ENCODE measurements at regions of chr22 and their contacts with region 1.

Region 1: GRCh38 chr22:32265882-32266767 is 11.0 kb upstream of the SLC5A4 start:
- DNase-seq: no peak

Region 2: GRCh38 chr22:31977141-31977841 is 288.8 kb before region 1 on chr22:
- intact Hi-C with region 1: loop called (anchors 5 to 10 kb)
- DNase-seq: peak; percentile 88

Region 3: GRCh38 chr22:32226326-32227104 is 39.6 kb before region 1 on chr22:
- intact Hi-C with region 1: no loop called
- DNase-seq: no peak

Region 4: DNA sequence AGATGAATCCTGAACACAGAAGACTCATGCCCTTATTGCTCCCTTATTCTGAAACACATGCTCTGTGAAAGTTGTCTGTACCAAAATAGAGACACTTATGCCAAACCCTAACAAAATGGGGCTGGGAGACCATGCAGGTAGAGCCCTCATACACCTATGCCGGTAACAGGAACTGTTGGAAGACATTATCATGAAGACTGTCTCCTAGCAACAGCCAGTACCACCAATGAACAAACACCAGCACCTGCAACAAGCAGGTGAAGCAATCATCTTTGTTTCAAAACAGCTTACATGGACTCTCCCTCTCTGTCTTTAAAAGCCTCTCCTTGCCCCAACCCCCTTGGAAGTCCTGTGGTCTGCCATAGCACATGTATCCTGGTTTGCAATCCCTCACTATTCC is 28.2 kb before region 1 on chr22:
- intact Hi-C with region 1: no loop called
- DNase-seq: no peak

Region 5: GRCh38 chr22:32354360-32355351 is 88.5 kb after region 1 on chr22:
- intact Hi-C with region 1: no loop called
- DNase-seq: no peak

Region 6: GRCh38 chr22:32932176-32932575 is 666.1 kb after region 1 on chr22:
- intact Hi-C with region 1: loop called in 1 of 2 experiments (anchors 5 kb)
- DNase-seq: no peak